Adrenal gland (tissue), 19 donors: ENCODE measurements at regions of chr2 and their contacts with region 1.

Region 1: DNA sequence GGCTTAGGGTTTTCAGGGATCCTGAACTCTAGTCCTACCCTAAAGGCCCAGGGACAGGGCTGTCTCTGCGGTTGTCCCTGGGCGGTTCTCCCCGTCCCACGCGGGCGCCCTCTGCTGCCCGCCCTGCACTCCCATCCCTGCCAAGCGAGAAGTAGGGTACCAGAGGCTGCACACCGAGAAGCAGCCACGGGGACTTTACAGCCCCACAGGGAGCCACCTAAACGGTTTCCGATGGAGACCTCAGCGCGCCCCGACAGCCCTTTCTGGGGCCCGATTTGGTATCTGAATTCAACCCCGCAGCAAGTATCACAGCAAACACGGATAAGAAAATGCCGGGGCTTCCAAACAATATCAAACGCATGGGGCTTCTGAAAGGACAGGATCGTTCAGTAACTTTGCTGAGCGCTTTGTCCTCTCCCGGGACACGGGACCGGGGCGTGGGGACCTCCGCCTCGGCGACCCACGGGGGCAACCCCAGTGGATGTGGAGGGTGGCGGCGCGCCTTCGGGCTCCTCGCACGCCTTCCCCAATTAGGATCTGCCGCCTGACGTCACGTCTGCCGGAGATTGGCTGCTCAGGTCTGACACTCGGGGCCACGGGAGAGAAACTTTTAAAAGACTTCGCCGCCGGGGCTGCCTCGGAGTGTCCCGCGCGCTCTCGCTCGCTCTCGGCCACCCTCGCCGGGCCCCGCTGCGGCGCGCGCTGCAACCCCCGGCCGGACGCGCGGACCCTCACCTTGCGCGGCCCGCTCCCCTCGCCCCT is at the start of gene LTBP1:
- DNase-seq: peak; percentile 57 to 77 (median 70)
- H3K4me3 ChIP-seq: peak within 1 kb of the TSS in 3 of 4 donors; percentile 48 to 85 (median 65)
- H3K27ac ChIP-seq: peak within 1 kb of the TSS in 3 of 5 donors; percentile 20 to 74 (median 47)
- H3K4me1 ChIP-seq: peaks cover 3 to 9% of the 10 kb centered on the region in 2 donors
- H3K27me3 ChIP-seq: no peaks in the 10 kb centered on the region
- CTCF ChIP-seq: peak; percentile 46 to 67 (median 63)
- POLR2A ChIP-seq: peak in 1 of 2 donors; percentile 20
- total RNA-seq, gene LTBP1: 14.6 to 47.2 (median 20.0) TPM

Region 2: GRCh38 chr2:32553829-32554432 is 392.6 kb before region 1 on chr2:
- intact Hi-C with region 1: loop called in 1 of 2 experiments (anchors 10 kb)
- DNase-seq: no peak
- H3K4me3 ChIP-seq: no peak overlapping the region
- H3K27ac ChIP-seq: no peak overlapping the region
- H3K4me1 ChIP-seq: no peaks in the 10 kb centered on the region
- H3K27me3 ChIP-seq: no peaks in the 10 kb centered on the region
- CTCF ChIP-seq: peak; percentile 59 to 79 (median 72)
- POLR2A ChIP-seq: no peak

Region 3: GRCh38 chr2:32772638-32773447 is 173.7 kb before region 1 on chr2:
- intact Hi-C with region 1: loop called (anchors 5 to 10 kb)
- DNase-seq: peak in 4 of 7 donors; percentile 14 to 24 (median 19)
- H3K4me3 ChIP-seq: no peak overlapping the region
- H3K27ac ChIP-seq: no peak overlapping the region
- H3K4me1 ChIP-seq: no peaks in the 10 kb centered on the region
- H3K27me3 ChIP-seq: no peaks in the 10 kb centered on the region
- CTCF ChIP-seq: peak; percentile 64 to 80 (median 71)
- POLR2A ChIP-seq: no peak

Region 4: GRCh38 chr2:33015421-33016142 is 69.1 kb after region 1 on chr2:
- intact Hi-C with region 1: loop called in 1 of 2 experiments (anchors 10 kb)
- DNase-seq: peak in 1 of 7 donors; percentile 25
- H3K4me3 ChIP-seq: no peak overlapping the region
- H3K27ac ChIP-seq: peak overlapping the region in 1 of 5 donors; percentile 55
- H3K4me1 ChIP-seq: no peaks in the 10 kb centered on the region
- H3K27me3 ChIP-seq: no peaks in the 10 kb centered on the region
- CTCF ChIP-seq: no peak
- POLR2A ChIP-seq: no peak